ENCODE measurements at regions of chr2 and their contacts with region 1.

Region 1: GRCh38 chr2:183838295-183838694 is 714.1 kb downstream of the NUP35 start:
- DNase-seq: no peak
- ATAC-seq: no peak
- H3K4me3 ChIP-seq: no peak overlapping the region
- H3K4me3 Mint-ChIP-seq: no peak overlapping the region
- H3K27ac ChIP-seq: no peak overlapping the region
- H3K27ac Mint-ChIP-seq: no peak overlapping the region
- H3K4me1 ChIP-seq: no peaks in the 10 kb centered on the region
- H3K4me1 Mint-ChIP-seq: no peaks in the 10 kb centered on the region
- H3K27me3 ChIP-seq: no peaks in the 10 kb centered on the region
- H3K27me3 Mint-ChIP-seq: no peaks in the 10 kb centered on the region

Region 2: GRCh38 chr2:183490914-183491313 is 347.4 kb before region 1 on chr2:
- CTCF ChIA-PET with region 1: no interaction called
- POLR2A ChIA-PET with region 1: no interaction called
- intact Hi-C with region 1: no loop called
- DNase-seq: no peak
- ATAC-seq: no peak
- H3K4me3 ChIP-seq: no peak overlapping the region
- H3K4me3 Mint-ChIP-seq: no peak overlapping the region
- H3K27ac ChIP-seq: no peak overlapping the region
- H3K27ac Mint-ChIP-seq: no peak overlapping the region
- H3K4me1 ChIP-seq: no peaks in the 10 kb centered on the region
- H3K4me1 Mint-ChIP-seq: peaks cover 0 to 2% (median 0%) of the 10 kb centered on the region in 7 donors
- H3K27me3 ChIP-seq: no peaks in the 10 kb centered on the region
- H3K27me3 Mint-ChIP-seq: no peaks in the 10 kb centered on the region

Region 3: GRCh38 chr2:183825710-183826109 is 12.6 kb before region 1 on chr2:
- CTCF ChIA-PET with region 1: no interaction called
- POLR2A ChIA-PET with region 1: no interaction called
- intact Hi-C with region 1: loop called in 1 of 2 experiments (anchors 1 kb)
- DNase-seq: no peak
- ATAC-seq: no peak
- H3K4me3 ChIP-seq: no peak overlapping the region
- H3K4me3 Mint-ChIP-seq: no peak overlapping the region
- H3K27ac ChIP-seq: no peak overlapping the region
- H3K27ac Mint-ChIP-seq: no peak overlapping the region
- H3K4me1 ChIP-seq: no peaks in the 10 kb centered on the region
- H3K4me1 Mint-ChIP-seq: no peaks in the 10 kb centered on the region
- H3K27me3 ChIP-seq: no peaks in the 10 kb centered on the region
- H3K27me3 Mint-ChIP-seq: no peaks in the 10 kb centered on the region

Region 4: GRCh38 chr2:184053326-184053725 is 215.0 kb after region 1 on chr2:
- CTCF ChIA-PET with region 1: no interaction called
- POLR2A ChIA-PET with region 1: no interaction called
- intact Hi-C with region 1: no loop called
- DNase-seq: no peak
- ATAC-seq: no peak
- H3K4me3 ChIP-seq: no peak overlapping the region
- H3K4me3 Mint-ChIP-seq: no peak overlapping the region
- H3K27ac ChIP-seq: no peak overlapping the region
- H3K27ac Mint-ChIP-seq: no peak overlapping the region
- H3K4me1 ChIP-seq: no peaks in the 10 kb centered on the region
- H3K4me1 Mint-ChIP-seq: no peaks in the 10 kb centered on the region
- H3K27me3 ChIP-seq: no peaks in the 10 kb centered on the region
- H3K27me3 Mint-ChIP-seq: no peaks in the 10 kb centered on the region